ENCODE measurements at regions of chr20 and their contacts with region 1.

Region 1: DNA sequence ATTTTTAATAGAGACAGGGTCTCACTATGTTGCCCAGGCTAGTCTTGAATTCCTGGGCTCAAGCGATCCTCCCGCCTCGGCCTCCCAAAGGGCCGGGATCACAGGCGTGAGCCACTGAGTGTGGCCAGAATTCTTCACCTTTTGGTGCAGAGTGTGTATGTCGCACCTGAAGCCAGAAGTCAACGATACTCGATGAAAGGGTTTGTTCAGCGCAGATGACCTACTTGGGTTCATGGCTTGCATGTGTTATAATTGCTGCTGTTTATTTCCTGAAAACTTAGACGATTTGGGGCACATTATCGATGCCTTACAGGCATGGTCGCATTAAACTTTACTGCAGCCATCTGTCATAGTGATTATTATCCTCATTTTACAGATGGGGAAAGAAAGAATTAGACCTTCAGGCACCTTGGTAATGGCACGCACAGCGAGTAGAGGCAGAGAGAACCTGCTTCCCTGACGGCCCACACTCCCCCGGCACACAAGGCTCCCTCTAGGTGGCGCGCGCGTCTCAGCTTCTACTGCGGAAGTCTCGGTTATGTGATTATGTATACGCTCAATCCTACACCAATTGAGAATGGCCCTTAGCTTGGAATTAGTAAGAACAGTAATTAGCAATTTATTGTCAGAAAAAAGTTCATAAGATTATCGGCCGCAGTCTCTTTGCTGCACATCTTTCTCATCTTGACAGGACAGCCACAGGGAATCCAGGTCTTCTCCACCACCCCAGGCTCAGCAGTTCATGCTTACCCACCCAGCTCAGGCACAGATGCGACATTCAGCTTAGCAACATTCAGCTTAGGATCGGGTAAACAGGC is 212.8 kb upstream of the PROKR2 start:
- DNase-seq: no peak
- H3K4me3 ChIP-seq: no peak overlapping the region
- CTCF ChIP-seq: peak; percentile 96

Region 2: GRCh38 chr20:5426026-5426425 is 103.5 kb before region 1 on chr20:
- CTCF ChIA-PET with region 1: no interaction called
- POLR2A ChIA-PET with region 1: no interaction called
- DNase-seq: no peak
- H3K4me3 ChIP-seq: no peak overlapping the region
- CTCF ChIP-seq: no peak

Region 3: GRCh38 chr20:5513975-5514516 is 15.5 kb before region 1 on chr20:
- CTCF ChIA-PET with region 1: interaction called, 21 read pairs
- POLR2A ChIA-PET with region 1: no interaction called
- DNase-seq: no peak
- H3K4me3 ChIP-seq: no peak overlapping the region
- CTCF ChIP-seq: no peak

Region 4: DNA sequence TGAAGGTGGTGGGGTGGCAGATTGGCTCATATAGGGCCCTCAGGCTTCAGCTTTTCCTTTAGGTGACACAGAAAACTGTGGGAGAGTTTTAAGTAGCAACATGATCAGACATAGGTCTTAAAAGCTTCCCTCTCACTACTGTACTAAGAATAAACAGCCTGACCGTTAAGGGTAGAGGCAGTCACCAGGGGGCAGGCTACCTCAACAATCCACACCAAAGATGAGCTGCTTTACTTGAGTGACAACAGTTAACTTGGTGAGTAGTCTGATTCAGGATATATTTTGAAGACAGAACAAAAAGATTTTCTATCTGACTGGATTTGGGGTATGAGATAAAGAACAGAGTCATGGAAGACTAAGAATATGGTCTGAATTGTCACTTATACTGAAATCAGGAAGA is 27.6 kb after region 1 on chr20:
- CTCF ChIA-PET with region 1: interaction called, 24 read pairs
- POLR2A ChIA-PET with region 1: no interaction called
- DNase-seq: no peak
- H3K4me3 ChIP-seq: no peak overlapping the region
- CTCF ChIP-seq: peak; percentile 58

Region 5: DNA sequence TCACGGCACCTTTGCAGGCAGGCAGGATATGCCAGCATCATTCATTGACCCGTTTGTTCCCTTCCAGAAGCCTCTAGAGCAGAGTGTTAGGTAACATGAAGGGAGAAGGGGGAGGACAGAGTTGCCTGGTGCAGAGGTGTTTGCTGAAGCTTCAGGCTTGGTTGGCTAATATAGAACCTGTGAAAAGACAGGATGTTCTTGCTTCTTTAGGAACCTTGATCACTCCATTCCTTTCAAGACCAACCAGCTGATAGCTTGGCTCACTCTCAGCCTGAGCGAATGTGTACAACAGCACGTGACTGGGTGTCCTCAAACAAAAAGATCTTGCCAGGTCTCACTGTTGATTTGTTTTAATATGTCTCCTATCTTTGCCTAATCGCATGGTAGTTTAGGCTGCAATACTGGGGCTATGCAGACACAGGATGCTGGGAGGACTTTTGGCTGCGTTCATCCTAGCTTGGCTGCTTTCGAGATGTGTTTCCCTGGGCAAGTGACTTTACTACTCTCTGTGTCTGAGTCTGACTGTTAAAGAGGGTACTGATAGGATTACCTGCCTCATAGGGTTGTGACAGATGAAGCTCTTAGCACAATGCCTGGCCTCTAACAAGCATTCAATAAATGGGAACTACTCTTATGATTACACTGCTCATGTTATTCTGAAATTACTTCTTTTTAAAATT is 236.7 kb after region 1 on chr20:
- CTCF ChIA-PET with region 1: no interaction called
- POLR2A ChIA-PET with region 1: no interaction called
- DNase-seq: no peak
- H3K4me3 ChIP-seq: no peak overlapping the region
- CTCF ChIP-seq: no peak

Region 6: DNA sequence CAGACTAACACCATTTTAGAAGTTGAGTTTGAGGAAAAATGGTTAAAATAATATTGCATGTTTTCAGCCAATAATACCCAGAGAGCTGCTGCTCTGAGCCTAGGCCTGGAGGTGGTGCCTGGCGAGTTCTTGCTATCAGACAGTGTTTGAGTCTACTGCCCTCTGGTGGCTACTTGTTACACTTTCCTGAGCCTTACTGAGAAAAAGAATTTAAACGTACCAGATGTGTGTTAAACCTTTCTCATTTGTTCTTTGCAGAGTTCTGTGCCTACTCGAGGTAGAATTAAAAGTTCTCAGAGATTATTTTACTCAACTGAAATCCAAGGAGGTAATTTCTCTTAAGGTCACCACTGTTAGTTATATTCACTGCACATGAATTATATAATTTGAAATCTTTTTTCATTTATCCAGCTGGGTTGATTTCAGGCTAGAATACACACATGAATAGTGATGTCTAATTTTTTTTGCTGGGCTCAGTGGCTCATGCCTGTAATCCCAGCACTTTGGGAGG is 258.9 kb after region 1 on chr20:
- CTCF ChIA-PET with region 1: interaction called, 229 read pairs
- POLR2A ChIA-PET with region 1: no interaction called
- DNase-seq: peak; percentile 52
- H3K4me3 ChIP-seq: no peak overlapping the region
- CTCF ChIP-seq: peak; percentile 61

Region 7: GRCh38 chr20:5950271-5951031 is 420.9 kb after region 1 on chr20 and contains the starts of genes MCM8 and TRMT6:
- CTCF ChIA-PET with region 1: interaction called, 13 read pairs
- POLR2A ChIA-PET with region 1: no interaction called
- DNase-seq: peak; percentile 66
- H3K4me3 ChIP-seq: peak within 1 kb of the TSS; percentile 94
- CTCF ChIP-seq: no peak

Region 8: GRCh38 chr20:5969348-5969935 is 439.9 kb after region 1 on chr20:
- CTCF ChIA-PET with region 1: no interaction called
- POLR2A ChIA-PET with region 1: no interaction called
- DNase-seq: no peak
- H3K4me3 ChIP-seq: no peak overlapping the region
- CTCF ChIP-seq: no peak

Region 9: DNA sequence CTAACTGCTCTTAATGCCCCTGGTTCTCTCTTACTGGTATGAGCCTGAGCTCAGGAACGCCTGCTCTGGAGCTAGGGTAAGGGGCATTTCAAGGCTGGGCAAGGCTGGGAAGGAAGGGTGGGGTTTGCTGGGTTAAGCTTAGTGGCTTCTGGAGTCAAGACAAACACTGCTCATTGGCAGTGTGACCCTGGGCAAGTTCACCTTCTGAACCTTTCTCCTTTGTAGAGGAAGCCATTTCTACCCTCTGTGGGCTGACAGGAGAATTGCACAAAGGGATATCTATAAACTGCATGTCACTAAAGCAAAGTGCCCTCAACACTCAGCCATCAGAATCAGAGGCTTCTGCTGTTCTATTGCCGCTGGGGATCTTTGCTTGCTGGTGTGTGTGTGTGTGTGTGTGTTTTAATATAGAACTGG is 544.6 kb after region 1 on chr20:
- CTCF ChIA-PET with region 1: interaction called, 170 read pairs
- POLR2A ChIA-PET with region 1: no interaction called
- DNase-seq: no peak
- H3K4me3 ChIP-seq: no peak overlapping the region
- CTCF ChIP-seq: peak; percentile 42

Measured in AG04449 (cell line).